Transverse colon (tissue), 4 donors: ENCODE measurements at regions of chr22 and their contacts with region 1.

Region 1: DNA sequence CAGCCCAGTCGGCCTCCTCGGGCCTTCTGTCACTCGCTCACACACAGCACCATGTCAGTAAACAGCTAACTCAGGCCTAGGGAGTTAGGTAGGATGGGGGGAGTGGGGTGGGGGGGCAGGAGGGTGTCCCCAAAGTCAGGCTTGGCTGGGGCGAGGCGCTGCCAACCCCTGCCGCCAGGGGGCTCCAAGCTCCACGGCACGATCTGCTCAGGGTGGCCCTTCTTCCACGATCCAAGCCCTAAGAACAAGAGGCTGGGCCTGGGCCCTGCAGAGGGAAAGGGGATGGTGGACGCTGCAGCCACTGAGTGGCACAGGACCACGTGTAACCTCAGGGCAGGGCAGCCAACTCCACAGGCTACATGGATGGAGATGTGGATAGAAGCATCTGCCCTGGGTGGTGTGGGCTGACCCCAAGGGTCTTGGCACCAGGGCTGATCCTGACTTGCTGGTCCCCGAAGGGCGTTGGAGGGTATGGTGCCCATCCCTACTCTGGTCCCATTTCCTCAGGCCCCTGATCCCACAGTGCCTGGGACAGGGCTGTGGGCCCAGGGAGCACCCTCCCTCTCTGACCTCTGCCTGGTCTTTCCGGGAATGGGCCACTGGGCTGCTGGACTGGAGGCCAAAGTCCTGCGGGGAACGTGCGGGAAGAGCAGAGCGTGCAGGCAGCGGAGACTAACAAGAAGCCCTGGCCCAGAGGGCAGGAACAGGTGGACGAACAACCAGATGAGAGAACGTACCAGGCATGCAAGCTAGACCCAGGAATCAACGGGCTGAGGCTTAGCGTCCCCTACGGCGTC is 29.1 kb upstream of the TXNRD2 start:
- DNase-seq: peak; percentile 73
- H3K4me3 ChIP-seq: no peak overlapping the region
- H3K27ac ChIP-seq: peak overlapping the region in 1 of 4 donors; percentile 1
- H3K4me1 ChIP-seq: peaks cover 0 to 5% (median 0%) of the 10 kb centered on the region in 4 donors
- H3K27me3 ChIP-seq: no peaks in the 10 kb centered on the region
- CTCF ChIP-seq: peak; percentile 88 to 97 (median 95)
- EP300 ChIP-seq: no peak
- POLR2A ChIP-seq: peak; percentile 1

Region 2: DNA sequence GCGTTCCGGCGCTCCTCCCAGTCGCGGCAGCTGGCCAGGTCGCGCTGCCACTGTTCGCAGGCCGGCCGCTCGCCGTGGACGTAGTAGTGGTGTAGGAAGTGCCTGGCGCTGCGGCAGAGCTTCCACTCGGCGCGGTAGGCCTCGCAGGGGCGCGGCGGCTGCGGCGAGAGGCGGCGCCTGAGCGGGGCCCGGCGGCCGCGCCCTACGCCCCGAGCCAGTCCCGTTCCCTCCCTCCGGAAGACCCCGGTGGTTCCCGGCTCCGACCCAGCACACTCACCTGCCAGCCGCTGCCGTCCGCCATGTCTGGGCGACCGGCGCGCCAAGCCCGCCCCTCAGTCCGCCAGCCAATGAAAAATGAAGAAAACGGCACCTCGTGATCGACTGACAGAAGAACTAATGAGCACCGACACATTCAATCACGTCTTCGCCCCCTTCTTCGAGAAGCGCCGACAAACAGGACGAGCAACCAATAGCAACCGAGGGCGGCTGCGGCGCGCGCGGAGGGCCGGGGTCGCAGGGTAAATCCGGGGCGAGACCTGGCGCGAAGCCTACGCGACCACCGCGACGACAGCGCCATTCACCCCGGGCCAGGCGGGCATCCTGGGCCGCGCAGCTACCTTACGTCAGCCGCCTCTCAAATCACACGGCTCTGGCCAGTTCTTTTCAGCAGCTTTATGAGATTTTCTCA is 523.1 kb before region 1 on chr22 and contains the start of gene C22orf39:
- in situ Hi-C with region 1: no loop called
- intact Hi-C with region 1: no loop called
- DNase-seq: peak; percentile 92
- H3K4me3 ChIP-seq: peak within 1 kb of the TSS; percentile 66 to 95 (median 76)
- H3K27ac ChIP-seq: peak within 1 kb of the TSS; percentile 92 to 97 (median 96)
- H3K4me1 ChIP-seq: peaks cover 16 to 23% (median 21%) of the 10 kb centered on the region in 4 donors
- H3K27me3 ChIP-seq: no peaks in the 10 kb centered on the region
- CTCF ChIP-seq: no peak
- EP300 ChIP-seq: no peak
- POLR2A ChIP-seq: peak; percentile 78
- total RNA-seq, gene C22orf39: 26.6 to 50.7 (median 39.4) TPM

Region 3: DNA sequence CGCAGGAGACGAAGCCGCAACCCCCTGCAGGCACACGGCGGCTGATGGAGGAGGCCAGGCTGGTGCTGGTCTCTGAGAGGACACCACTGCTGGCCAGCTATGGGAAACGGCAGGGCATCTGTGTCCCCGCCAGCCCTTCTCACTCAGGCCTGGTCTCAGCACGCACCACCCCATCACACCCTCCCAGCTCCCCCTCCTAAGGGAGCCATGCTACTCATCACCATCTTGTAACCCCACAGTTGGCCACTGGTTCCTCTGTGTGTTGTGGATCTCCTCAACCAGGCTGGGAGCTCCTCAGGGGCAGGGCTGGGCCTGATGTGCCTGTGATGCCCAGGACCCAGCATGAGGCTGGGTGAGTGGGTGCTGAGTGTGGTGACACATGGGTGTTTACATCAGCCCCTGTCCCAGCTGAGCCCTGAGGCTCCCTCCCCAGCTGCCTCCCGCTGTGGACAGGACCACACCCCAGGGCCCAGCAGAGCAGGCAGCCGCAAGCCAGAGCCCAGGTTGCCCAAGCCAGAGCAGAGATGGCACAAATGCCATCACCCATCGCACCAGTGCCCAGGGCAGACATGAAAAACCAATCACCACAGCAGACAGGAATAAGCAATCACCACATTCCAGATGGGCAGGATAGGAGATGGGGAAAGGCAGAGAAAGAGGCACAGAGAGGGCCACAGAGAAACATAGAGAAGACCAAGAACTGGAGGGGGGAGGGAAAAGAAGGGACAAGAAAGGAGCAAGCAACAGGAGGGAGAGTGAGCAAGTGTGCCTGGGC is 37.7 kb after region 1 on chr22:
- in situ Hi-C with region 1: loop called in 1 of 4 experiments (anchors 5 kb)
- intact Hi-C with region 1: loop called (anchors 2 kb)
- DNase-seq: no peak
- H3K4me3 ChIP-seq: no peak overlapping the region
- H3K27ac ChIP-seq: no peak overlapping the region
- H3K4me1 ChIP-seq: no peaks in the 10 kb centered on the region
- H3K27me3 ChIP-seq: no peaks in the 10 kb centered on the region
- CTCF ChIP-seq: no peak
- EP300 ChIP-seq: no peak
- POLR2A ChIP-seq: no peak

Region 4: DNA sequence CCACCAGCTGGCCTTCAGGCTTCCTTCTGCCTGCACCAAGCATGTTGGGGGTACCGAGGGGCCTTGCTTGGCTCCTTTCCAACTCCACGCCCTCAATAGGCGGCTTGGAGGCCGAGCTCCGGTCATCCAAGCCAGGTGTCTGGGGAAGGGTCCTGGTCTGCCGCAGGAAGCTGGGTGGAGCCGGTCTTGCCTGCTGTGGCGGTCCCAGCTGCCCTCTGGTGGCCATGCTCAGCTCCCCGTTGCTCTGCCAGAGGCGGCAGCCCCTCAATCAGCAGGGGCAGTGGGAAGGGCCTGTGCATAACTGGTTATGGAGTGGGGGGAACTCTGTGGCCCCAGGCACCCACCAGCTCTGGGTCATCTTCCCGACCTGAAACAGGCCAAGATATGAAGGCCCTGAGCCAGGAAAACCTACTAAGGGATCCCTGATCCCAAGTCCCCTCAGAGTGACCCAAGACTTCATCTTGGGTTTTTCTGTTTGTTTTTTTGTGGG is 42.8 kb after region 1 on chr22:
- in situ Hi-C with region 1: loop called in 1 of 4 experiments (anchors 5 kb)
- intact Hi-C with region 1: loop called (anchors 2 kb)
- DNase-seq: peak; percentile 38
- H3K4me3 ChIP-seq: no peak overlapping the region
- H3K27ac ChIP-seq: no peak overlapping the region
- H3K4me1 ChIP-seq: peaks cover 5 to 15% (median 14%) of the 10 kb centered on the region in 4 donors
- H3K27me3 ChIP-seq: peaks cover 17% of the 10 kb centered on the region
- CTCF ChIP-seq: peak; percentile 46 to 73 (median 56)
- EP300 ChIP-seq: no peak
- POLR2A ChIP-seq: no peak

Region 5: DNA sequence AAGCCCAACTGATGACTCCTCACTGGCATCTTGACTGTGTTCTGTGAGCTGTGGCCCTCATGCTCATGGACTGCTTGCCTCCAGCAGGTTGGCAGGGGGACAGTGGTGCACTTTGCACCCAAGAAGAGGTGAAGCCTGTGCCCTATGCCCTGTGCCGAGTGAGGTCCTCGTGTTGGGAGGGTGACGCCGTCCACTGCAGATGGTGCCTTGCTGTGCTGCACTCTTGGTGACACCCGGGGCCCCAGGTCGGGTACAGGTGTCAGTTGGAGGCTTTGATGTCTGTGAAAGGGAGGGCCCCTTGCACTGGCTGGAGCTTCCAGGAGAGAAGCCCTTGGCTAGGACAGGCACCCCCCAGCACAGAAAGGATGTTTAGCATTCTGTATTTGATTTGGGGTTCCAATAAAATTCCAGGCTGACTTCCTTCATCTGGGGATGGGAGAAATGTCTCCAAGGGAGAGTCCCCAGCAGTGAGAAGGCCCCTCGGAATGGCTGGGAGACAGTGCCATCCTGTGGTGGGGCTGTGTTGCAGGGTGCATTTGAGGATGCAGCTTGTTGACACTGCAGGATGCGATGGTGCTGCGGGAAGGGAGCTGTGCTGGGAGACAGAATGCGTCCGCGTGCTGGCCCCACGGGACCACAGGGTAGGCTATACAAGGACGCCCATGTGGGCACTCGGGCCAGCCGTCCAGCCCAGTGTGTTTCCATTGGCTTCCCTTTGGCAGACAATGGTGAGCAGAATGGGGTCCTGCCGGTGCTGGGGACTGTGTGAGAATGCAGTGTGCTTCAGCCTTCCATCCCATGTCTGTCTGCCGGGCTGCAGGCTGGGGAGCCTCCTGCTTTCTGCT is 158.4 kb after region 1 on chr22:
- in situ Hi-C with region 1: no loop called
- intact Hi-C with region 1: loop called (anchors 10 kb)
- DNase-seq: peak; percentile 38
- H3K4me3 ChIP-seq: no peak overlapping the region
- H3K27ac ChIP-seq: no peak overlapping the region
- H3K4me1 ChIP-seq: peaks cover 11 to 21% (median 17%) of the 10 kb centered on the region in 4 donors
- H3K27me3 ChIP-seq: no peaks in the 10 kb centered on the region
- CTCF ChIP-seq: peak in 3 of 5 experiments; percentile 13 to 30 (median 19)
- EP300 ChIP-seq: no peak
- POLR2A ChIP-seq: no peak